Activated CD4-positive, alpha-beta T cell treated with anti-CD3 and anti-CD28 coated beads for 36 hours (primary cell): ENCODE measurements at regions of chr3 and their contacts with region 1.

Region 1: GRCh38 chr3:159884661-159885402 is 103.8 kb upstream of the IL12A start:
- DNase-seq: no peak
- ATAC-seq: peak; percentile 33
- H3K4me3 Mint-ChIP-seq: no peak overlapping the region
- H3K27ac Mint-ChIP-seq: no peak overlapping the region
- H3K4me1 Mint-ChIP-seq: no peaks in the 10 kb centered on the region
- H3K27me3 Mint-ChIP-seq: peaks cover 3% of the 10 kb centered on the region

Region 2: DNA sequence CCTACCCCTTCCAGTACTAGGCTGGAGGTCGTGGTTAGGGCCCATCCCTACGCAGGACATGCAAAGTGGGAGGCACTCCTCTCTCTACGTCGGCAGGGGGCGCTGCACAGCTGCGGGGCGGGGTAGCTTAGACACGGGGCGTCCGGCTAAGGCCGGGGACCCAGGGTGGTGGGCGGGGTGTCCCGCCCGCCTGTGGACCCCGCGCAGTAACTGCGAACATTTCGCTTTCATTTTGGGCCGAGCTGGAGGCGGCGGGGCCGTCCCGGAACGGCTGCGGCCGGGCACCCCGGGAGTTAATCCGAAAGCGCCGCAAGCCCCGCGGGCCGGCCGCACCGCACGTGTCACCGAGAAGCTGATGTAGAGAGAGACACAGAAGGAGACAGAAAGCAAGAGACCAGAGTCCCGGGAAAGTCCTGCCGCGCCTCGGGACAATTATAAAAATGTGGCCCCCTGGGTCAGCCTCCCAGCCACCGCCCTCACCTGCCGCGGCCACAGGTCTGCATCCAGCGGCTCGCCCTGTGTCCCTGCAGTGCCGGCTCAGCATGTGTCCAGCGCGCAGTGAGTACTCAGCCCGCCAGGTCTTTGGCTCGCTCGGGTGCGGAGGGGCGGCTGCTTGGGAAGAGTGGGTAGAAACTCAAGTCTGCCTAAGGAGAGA is 103.9 kb after region 1 on chr3 and contains the start of gene IL12A:
- CTCF ChIA-PET with region 1: interaction called, 17 read pairs
- POLR2A ChIA-PET with region 1: no interaction called
- intact Hi-C with region 1: no loop called
- DNase-seq: peak; percentile 88
- ATAC-seq: peak; percentile 95
- H3K4me3 Mint-ChIP-seq: peak within 1 kb of the TSS; percentile 52
- H3K27ac Mint-ChIP-seq: peak within 1 kb of the TSS; percentile 44
- H3K4me1 Mint-ChIP-seq: peaks cover 21% of the 10 kb centered on the region
- H3K27me3 Mint-ChIP-seq: peaks cover 13% of the 10 kb centered on the region
- total RNA-seq, gene IL12A: not detected

Region 3: DNA sequence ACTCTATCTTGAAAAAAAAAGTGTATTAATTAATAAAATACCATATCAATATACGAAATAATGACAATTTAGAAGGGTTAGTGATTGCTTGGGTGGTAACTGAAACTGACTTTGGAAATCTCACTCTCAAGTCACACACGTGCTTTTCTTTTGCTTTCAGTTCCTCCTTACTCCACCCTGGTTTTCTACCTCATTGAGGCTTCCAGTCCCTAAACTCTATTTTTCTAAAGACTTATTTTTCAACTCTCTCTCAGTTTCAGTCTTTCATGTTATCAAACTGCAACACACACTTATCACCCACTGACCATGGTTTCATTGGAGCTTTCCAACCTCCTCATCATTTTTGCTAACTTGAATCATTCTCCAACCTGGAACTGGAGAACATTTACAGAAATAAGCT is 127.3 kb after region 1 on chr3:
- CTCF ChIA-PET with region 1: interaction called, 114 read pairs
- POLR2A ChIA-PET with region 1: interaction called, 4 read pairs
- intact Hi-C with region 1: no loop called
- DNase-seq: no peak
- ATAC-seq: peak; percentile 46
- H3K4me3 Mint-ChIP-seq: no peak overlapping the region
- H3K27ac Mint-ChIP-seq: no peak overlapping the region
- H3K4me1 Mint-ChIP-seq: peaks cover 10% of the 10 kb centered on the region
- H3K27me3 Mint-ChIP-seq: no peaks in the 10 kb centered on the region

Region 4: GRCh38 chr3:160343132-160343531 is 458.3 kb after region 1 on chr3:
- CTCF ChIA-PET with region 1: interaction called, 3 read pairs
- POLR2A ChIA-PET with region 1: no interaction called
- intact Hi-C with region 1: loop called in 1 of 2 experiments (anchors 5 kb)
- DNase-seq: no peak
- ATAC-seq: no peak
- H3K4me3 Mint-ChIP-seq: no peak overlapping the region
- H3K27ac Mint-ChIP-seq: no peak overlapping the region
- H3K4me1 Mint-ChIP-seq: no peaks in the 10 kb centered on the region
- H3K27me3 Mint-ChIP-seq: no peaks in the 10 kb centered on the region